ENCODE measurements at regions of chr11 and their contacts with region 1.

Region 1: GRCh38 chr11:33970984-33971466 is 79.1 kb upstream of the LMO2 start:
- DNase-seq: peak; percentile 76
- CTCF ChIP-seq: peak; percentile 76

Region 2: GRCh38 chr11:33835143-33835878 is 135.7 kb before region 1 on chr11:
- CTCF ChIA-PET with region 1: interaction called, 11 read pairs
- POLR2A ChIA-PET with region 1: no interaction called
- DNase-seq: no peak
- CTCF ChIP-seq: no peak

Region 3: GRCh38 chr11:33857933-33858371 is 113.1 kb before region 1 on chr11:
- CTCF ChIA-PET with region 1: interaction called, 199 read pairs
- POLR2A ChIA-PET with region 1: no interaction called
- DNase-seq: peak; percentile 74
- CTCF ChIP-seq: peak; percentile 96

Region 4: DNA sequence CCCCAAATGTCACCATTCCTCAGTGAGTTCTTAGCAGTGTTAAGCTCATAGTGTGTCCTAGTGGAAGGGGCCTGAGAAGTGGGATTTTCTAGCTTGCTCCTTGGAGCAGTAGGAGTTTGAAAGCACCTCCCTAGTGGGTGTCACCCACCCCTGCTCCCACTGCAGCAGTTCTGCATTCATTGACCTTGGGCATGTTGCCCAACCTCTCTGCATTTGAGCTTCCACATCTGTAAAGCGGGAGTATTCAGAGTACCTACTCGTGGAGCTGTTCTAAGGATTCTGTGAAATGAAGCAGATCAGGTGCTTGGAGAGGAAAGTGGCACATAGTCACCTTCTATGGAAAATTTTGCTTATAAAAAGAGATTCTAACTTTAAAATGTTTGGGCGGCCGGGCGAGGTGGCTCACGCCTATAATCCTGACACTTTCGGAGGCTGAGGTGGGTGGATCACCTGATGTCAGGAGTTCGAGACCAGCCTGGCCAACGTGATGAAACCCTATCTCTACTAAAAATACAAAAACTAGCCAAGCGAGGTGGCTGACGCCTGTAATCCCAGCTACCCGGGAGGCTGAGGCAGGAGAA is 96.0 kb before region 1 on chr11:
- CTCF ChIA-PET with region 1: interaction called, 56 read pairs
- POLR2A ChIA-PET with region 1: no interaction called
- DNase-seq: no peak
- CTCF ChIP-seq: no peak

Region 5: GRCh38 chr11:33893711-33894397 is 77.2 kb before region 1 on chr11:
- CTCF ChIA-PET with region 1: interaction called, 16 read pairs
- POLR2A ChIA-PET with region 1: no interaction called
- DNase-seq: peak; percentile 71
- CTCF ChIP-seq: no peak

Region 6: DNA sequence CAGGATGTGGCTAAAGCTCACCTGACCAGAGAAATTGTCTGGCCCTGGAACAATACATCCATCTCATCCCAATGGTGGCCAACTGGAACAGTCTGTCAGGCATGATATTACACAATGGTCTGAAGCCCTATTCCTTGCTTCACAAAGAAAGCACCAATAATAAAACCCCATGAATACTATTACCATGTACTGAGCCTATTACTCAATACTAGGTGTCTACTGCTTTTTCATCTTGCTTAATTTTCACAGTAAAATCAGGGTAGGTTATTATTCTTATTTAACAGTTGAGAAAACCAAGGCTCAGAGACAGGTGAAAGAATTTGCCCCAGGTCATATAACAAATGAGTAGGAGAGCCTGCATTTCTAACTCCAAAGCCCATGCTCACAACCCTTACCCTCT is 11.6 kb after region 1 on chr11:
- CTCF ChIA-PET with region 1: interaction called, 36 read pairs
- POLR2A ChIA-PET with region 1: no interaction called
- DNase-seq: no peak
- CTCF ChIP-seq: no peak

Region 7: GRCh38 chr11:34021977-34022735 is 51.1 kb after region 1 on chr11:
- CTCF ChIA-PET with region 1: no interaction called
- POLR2A ChIA-PET with region 1: no interaction called
- DNase-seq: no peak
- CTCF ChIP-seq: no peak

Region 8: DNA sequence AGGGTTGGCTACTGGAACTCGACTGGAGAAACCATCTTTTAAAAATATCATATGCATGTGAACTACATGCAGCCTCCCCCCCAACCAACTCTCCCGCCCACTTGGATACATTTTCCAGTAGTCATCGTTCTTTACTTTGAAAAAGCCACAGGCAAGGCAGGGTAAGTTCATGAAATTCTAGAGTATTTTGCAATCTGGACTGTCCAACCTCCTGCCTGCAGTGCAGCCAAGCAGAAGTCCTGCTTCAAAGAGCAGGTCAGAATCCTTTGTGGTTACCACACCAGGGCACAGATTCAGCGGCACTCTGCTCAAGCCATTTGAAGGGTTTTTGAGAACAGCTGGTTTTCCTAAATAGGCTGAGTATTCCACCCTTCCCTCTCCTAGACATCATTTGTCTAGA is 530.5 kb after region 1 on chr11:
- CTCF ChIA-PET with region 1: no interaction called
- POLR2A ChIA-PET with region 1: no interaction called
- DNase-seq: no peak
- CTCF ChIP-seq: no peak